ENCODE measurements at regions of chr1 and their contacts with region 1.

Region 1: DNA sequence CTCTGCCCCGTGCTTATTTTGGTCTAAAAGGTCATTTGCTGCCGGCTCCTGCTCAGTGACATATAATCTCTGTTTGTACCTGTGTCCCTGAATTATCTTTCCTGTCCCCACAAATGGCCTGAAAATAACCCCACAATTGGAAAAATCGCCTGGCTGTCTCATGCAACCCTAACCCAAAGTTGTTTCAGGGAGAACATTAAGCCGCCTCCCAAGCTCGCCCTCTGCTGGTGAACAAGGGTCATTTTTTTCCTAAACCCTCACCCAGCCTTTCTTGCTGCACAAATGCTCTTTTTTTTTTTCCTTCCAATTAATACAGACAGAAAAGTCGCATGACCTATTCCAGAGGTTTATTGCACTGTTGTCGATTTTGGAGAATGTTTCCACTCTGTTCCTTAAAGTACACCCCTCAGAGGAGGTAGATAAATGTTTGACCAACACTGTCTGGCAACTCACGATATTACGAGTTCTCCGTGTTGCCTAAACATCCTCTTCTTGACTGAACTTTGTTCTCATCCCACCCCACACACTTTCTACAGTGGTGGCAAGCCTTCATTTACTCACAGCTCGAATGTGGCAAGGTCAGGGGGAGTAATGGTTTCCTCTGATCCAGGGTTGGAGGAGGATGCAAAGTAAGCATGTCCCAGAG is 148.7 kb downstream of the ZZZ3 start:
- DNase-seq: peak; percentile 75
- ATAC-seq: peak; percentile 70
- H3K4me3 Mint-ChIP-seq: no peak overlapping the region
- H3K27ac Mint-ChIP-seq: peak overlapping the region; percentile 69
- H3K4me1 Mint-ChIP-seq: peaks cover 7% of the 10 kb centered on the region
- H3K27me3 Mint-ChIP-seq: no peaks in the 10 kb centered on the region

Region 2: GRCh38 chr1:75991497-75992114 is 1542.2 kb before region 1 on chr1:
- CTCF ChIA-PET with region 1: no interaction called
- POLR2A ChIA-PET with region 1: no interaction called
- intact Hi-C with region 1: loop called in 1 of 2 experiments (anchors 10 kb)
- DNase-seq: peak; percentile 87
- ATAC-seq: peak; percentile 60
- H3K4me3 Mint-ChIP-seq: no peak overlapping the region
- H3K27ac Mint-ChIP-seq: no peak overlapping the region
- H3K4me1 Mint-ChIP-seq: no peaks in the 10 kb centered on the region
- H3K27me3 Mint-ChIP-seq: no peaks in the 10 kb centered on the region

Region 3: DNA sequence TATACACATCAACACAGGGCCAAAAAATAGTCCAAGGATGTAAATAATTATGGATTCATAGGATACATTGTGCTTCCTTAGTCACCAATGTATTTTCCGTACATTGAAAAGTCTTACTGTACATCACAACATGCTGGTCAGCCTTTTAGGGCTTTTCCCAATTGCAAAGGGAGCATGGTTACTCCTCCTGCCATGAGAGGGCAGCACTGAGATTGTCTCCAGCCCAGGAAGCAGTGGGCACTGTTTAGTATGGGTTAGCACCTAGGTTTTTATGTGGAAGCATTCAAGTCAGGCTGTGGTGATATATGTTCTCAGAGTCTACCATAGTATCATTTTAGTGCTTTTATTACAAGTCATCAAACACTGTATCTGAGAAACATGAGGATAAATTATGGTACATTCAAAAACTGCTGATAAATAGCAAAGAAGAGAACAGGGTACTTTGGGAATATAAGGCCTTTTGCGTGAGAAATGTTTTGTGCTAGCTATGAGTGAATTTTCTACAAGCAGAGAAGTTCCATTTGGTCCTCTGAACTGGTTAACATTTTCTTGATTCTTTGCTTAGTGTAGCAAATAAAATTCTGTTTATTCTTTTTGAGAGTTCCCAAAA is 632.5 kb before region 1 on chr1:
- CTCF ChIA-PET with region 1: no interaction called
- POLR2A ChIA-PET with region 1: no interaction called
- intact Hi-C with region 1: loop called in 1 of 2 experiments (anchors 5 kb)
- DNase-seq: peak; percentile 53
- ATAC-seq: peak; percentile 86
- H3K4me3 Mint-ChIP-seq: no peak overlapping the region
- H3K27ac Mint-ChIP-seq: no peak overlapping the region
- H3K4me1 Mint-ChIP-seq: no peaks in the 10 kb centered on the region
- H3K27me3 Mint-ChIP-seq: no peaks in the 10 kb centered on the region

Region 4: DNA sequence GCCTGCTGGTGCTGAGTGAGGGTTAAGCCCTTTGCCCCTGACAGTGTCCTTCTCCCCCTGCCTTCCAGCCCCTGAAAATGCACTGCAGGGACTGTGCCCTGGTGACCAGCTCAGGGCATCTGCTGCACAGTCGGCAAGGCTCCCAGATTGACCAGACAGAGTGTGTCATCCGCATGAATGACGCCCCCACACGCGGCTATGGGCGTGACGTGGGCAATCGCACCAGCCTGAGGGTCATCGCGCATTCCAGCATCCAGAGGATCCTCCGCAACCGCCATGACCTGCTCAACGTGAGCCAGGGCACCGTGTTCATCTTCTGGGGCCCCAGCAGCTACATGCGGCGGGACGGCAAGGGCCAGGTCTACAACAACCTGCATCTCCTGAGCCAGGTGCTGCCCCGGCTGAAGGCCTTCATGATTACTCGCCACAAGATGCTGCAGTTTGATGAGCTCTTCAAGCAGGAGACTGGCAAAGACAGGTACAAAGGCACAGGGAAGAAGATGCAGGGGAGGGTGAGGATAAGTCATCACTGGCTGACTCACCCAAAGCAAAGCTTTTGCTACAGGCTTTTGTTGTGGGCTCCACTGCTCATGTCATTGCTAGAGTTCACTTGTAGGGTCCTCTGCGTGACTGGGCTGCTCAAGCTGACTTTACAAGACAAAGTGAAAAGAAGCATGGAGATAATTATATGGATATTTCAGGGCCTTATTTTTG is 489.5 kb before region 1 on chr1:
- CTCF ChIA-PET with region 1: no interaction called
- POLR2A ChIA-PET with region 1: no interaction called
- intact Hi-C with region 1: no loop called
- DNase-seq: peak; percentile 37
- ATAC-seq: peak; percentile 95
- H3K4me3 Mint-ChIP-seq: no peak overlapping the region
- H3K27ac Mint-ChIP-seq: no peak overlapping the region
- H3K4me1 Mint-ChIP-seq: peaks cover 19% of the 10 kb centered on the region
- H3K27me3 Mint-ChIP-seq: peaks cover 2% of the 10 kb centered on the region

Region 5: DNA sequence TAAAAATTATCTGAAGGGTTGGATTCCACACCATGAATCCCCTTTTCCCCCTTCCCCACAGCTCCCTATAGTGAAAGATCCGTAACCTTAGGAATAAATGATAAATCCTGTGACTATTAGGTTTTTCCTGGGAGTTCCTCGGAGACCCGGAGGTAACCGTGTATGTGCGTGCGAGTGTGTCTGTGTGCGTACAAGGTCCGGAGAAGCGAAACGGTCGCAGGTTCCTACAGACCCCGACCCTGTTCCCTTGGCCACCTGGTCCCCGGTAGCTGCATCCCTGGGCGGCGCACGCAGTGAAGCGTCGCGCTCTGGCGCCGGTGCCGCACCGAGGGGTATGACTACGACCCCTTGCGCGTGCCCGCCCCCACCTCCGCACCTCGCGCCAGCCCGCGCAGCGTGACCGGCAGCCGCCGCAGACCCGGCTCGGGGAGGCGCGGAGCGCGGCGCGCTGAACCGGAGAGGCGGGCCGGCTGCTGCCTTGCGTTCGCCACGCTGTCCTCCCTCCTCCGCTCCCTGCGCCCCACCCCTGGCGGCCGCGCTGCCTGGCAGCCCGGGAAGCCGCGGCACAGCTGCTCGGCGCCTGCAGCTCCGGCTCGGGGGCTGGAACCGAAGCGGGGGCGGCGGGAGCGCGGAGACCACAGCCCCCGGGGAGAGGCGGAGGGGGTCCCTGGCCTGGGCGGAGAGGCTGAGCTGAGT is 252.1 kb before region 1 on chr1 and contains the start of gene AK5:
- CTCF ChIA-PET with region 1: interaction called, 3 read pairs
- POLR2A ChIA-PET with region 1: no interaction called
- intact Hi-C with region 1: loop called in 1 of 2 experiments (anchors 2 kb)
- DNase-seq: peak; percentile 75
- ATAC-seq: peak; percentile 77
- H3K4me3 Mint-ChIP-seq: peak within 1 kb of the TSS; percentile 70
- H3K27ac Mint-ChIP-seq: peak within 1 kb of the TSS; percentile 64
- H3K4me1 Mint-ChIP-seq: peaks cover 32% of the 10 kb centered on the region
- H3K27me3 Mint-ChIP-seq: no peaks in the 10 kb centered on the region
- total RNA-seq, gene AK5: 9.9 TPM

Region 6: GRCh38 chr1:77438236-77438913 is 95.4 kb before region 1 on chr1:
- CTCF ChIA-PET with region 1: no interaction called
- POLR2A ChIA-PET with region 1: no interaction called
- intact Hi-C with region 1: loop called in 1 of 2 experiments (anchors 5 kb)
- DNase-seq: no peak
- ATAC-seq: no peak
- H3K4me3 Mint-ChIP-seq: peak overlapping the region; percentile 27
- H3K27ac Mint-ChIP-seq: peak overlapping the region; percentile 88
- H3K4me1 Mint-ChIP-seq: peaks cover 35% of the 10 kb centered on the region
- H3K27me3 Mint-ChIP-seq: no peaks in the 10 kb centered on the region

Region 7: DNA sequence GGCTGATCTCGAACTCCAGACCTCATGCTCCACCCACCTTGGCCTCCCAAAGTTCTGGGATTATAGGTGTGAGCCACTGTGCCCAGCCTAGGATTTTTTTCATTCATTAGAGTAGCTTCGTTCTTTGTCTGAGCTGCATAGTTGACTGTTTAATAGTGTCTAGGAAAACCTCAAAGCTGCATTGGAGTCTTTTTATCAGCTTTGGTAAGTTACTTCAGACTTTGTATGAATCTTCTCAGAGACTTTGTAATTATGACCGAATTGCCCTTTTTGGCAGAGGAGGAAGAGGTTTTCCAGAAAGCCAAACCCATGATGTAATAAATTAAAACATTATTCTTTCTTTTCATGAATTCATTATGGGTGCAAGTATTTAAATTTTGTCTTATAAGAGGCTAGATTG is 476.1 kb after region 1 on chr1:
- CTCF ChIA-PET with region 1: no interaction called
- POLR2A ChIA-PET with region 1: no interaction called
- intact Hi-C with region 1: no loop called
- DNase-seq: no peak
- ATAC-seq: no peak
- H3K4me3 Mint-ChIP-seq: no peak overlapping the region
- H3K27ac Mint-ChIP-seq: no peak overlapping the region
- H3K4me1 Mint-ChIP-seq: peaks cover 27% of the 10 kb centered on the region
- H3K27me3 Mint-ChIP-seq: no peaks in the 10 kb centered on the region

Region 8: GRCh38 chr1:78483903-78484302 is 950.1 kb after region 1 on chr1:
- CTCF ChIA-PET with region 1: no interaction called
- POLR2A ChIA-PET with region 1: no interaction called
- intact Hi-C with region 1: no loop called
- DNase-seq: no peak
- ATAC-seq: no peak
- H3K4me3 Mint-ChIP-seq: no peak overlapping the region
- H3K27ac Mint-ChIP-seq: no peak overlapping the region
- H3K4me1 Mint-ChIP-seq: no peaks in the 10 kb centered on the region
- H3K27me3 Mint-ChIP-seq: peaks cover 12% of the 10 kb centered on the region